Posterior cingulate gyrus (tissue), 11 donors: ENCODE measurements at regions of chr4 and their contacts with region 1.

Region 1: DNA sequence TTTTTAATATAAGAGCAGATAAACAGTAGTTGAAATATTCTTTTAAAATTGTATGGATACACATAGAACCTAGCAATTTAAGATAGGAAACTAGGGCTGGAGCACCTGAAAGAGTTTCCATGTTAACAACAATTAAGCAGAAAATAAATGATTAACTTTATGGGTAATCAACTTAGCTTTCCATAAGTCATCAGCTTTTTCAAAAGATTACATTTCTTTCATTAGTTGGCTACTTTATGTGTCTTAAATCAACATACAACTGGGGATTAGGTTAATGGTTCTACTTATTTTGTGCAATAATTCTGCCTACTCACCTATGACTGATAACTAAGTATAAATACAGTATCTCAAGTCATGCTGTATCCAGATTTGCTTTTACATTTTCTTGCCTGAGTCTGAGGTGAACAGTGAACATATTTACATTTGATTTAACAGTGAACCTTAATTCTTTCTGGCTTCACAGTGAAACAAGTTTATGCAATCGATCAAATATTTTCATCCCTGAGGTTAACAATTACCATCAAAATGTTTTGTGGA is at the start of gene ANXA10:
- DNase-seq: no peak

Region 2: DNA sequence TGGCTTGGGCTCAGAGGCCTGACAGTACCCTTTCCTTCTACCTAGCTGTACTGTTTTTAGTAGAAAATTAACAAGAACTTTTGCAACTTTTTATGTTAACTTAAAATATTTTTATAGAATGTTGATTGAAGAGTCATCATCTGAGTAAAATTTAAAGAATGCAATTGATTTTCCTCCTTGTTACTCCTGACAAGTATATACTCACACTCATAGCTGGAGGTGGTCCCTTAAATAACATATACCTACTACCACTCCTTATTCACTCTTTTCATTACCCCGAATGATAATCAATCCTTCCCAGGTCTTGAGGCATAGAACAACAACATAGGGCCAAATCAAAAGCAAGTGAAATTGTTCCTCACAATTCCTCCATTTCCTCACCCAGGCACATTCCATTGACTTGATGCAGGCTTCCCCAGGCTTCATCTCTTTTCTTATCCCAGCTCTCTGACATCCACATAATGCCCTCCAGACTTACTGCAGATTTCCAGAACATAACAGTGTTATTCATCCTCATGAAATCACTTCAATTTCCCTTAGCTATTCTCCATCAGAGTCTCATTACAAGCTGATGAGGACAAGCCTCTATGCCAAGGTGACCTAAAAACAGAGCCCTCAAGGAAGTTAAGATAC is 73.1 kb before region 1 on chr4:
- intact Hi-C with region 1: loop called (anchors 2 kb)
- DNase-seq: no peak

Region 3: GRCh38 chr4:168199260-168199957 is 107.2 kb after region 1 on chr4:
- intact Hi-C with region 1: no loop called
- DNase-seq: no peak